T-cell (primary cell): ENCODE measurements at regions of chr12 and their contacts with region 1.

Region 1: DNA sequence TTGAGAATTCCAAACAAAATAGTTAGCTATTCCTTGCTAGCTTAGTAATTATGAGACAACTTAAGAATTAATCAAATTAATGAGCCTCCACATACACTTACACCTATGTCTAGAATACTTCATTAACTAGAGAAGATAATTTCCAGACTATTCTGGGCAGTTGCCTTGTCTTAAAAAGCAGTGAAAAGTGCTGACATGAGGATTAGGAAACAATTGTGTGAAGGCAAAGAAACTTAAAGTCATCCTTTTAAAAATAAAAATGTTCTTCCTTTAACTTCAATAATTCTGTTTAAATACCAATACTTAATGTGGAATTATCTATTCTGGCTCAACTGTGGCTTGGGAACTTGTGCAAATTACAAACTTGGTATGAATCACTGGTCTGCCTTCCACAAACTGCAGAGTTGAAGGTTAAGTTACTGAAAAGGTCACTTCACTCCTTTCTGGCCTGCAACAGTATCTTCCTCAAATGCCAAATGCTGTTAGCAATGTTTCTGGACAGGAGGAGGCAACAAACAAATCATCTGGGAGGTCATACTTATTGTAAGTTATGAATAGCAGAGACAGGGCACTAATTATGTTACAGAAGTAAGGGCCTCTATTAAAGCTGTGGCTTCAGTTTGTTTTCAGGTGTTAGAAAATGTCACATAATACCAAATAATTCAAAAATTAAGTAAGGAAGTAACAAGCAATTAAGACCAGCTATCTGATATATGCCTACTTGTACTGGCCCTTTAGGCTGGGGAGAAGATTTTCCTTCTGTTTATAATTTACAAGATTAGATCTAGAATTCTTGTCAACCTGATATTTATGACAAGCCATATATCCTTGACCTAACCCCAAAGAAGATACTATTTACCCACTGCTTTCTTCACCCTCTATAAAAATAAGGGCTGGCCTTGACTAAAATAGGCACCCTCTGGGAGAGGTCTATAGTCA is 19.1 kb downstream of the PPTC7 start:
- DNase-seq: no peak
- ATAC-seq: no peak
- H3K4me3 ChIP-seq: no peak overlapping the region
- H3K4me3 Mint-ChIP-seq: no peak overlapping the region
- H3K27ac ChIP-seq: peak overlapping the region; percentile 55
- H3K27ac Mint-ChIP-seq: peak overlapping the region; percentile 75 to 88
- H3K4me1 ChIP-seq: peaks cover 28 to 55% of the 10 kb centered on the region in 2 experiments
- H3K4me1 Mint-ChIP-seq: peaks cover 79 to 81% (median 80%) of the 10 kb centered on the region in 3 donors
- H3K27me3 ChIP-seq: no peaks in the 10 kb centered on the region
- H3K27me3 Mint-ChIP-seq: no peaks in the 10 kb centered on the region

Region 2: DNA sequence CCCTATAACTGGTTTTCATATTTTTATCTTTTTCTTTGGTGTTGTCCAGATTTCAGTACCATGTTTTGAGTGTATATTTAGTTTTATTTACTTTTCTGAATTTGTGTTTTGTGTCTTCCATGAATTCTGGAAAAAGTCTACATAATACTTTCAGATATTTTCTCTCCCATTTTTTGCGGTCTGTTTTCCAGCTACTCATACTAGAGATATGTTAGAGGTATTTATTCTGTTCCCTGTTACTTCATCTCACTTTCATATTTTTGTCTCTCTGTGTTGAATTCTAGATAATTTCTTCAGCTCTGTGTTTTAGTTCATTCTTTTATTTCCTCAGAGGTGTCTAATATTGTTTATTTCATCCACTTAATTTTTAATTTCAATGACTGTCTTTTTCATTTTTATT is 365.6 kb before region 1 on chr12:
- CTCF ChIA-PET with region 1: no interaction called
- POLR2A ChIA-PET with region 1: no interaction called
- DNase-seq: no peak
- ATAC-seq: no peak
- H3K4me3 ChIP-seq: no peak overlapping the region
- H3K4me3 Mint-ChIP-seq: no peak overlapping the region
- H3K27ac ChIP-seq: no peak overlapping the region
- H3K27ac Mint-ChIP-seq: no peak overlapping the region
- H3K4me1 ChIP-seq: peaks cover 0 to 4% of the 10 kb centered on the region in 2 experiments
- H3K4me1 Mint-ChIP-seq: peaks cover 6 to 8% (median 7%) of the 10 kb centered on the region in 3 donors
- H3K27me3 ChIP-seq: no peaks in the 10 kb centered on the region
- H3K27me3 Mint-ChIP-seq: no peaks in the 10 kb centered on the region

Region 3: DNA sequence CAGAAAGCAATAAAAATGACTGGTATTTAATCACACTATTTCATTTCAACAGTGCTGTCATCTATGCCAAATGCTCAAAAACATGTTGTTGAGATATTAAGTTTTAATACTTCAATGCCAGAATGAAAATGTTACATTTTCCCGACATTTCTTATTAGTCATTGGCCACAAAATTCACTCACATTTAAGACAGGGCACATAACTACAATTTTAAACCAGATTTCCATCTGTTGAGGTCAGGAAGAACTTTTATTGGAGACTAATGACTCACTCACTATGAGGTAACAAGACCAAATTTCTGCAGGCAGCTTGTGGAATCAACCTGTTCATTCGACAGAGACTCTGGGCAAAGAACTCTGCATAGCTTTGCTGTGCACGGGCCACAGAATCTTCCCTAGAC is 17.6 kb before region 1 on chr12:
- CTCF ChIA-PET with region 1: interaction called in 1 of 2 experiments, 5 read pairs
- POLR2A ChIA-PET with region 1: interaction called in 1 of 2 experiments, 14 read pairs
- DNase-seq: no peak
- ATAC-seq: no peak
- H3K4me3 ChIP-seq: no peak overlapping the region
- H3K4me3 Mint-ChIP-seq: no peak overlapping the region
- H3K27ac ChIP-seq: no peak overlapping the region
- H3K27ac Mint-ChIP-seq: peak overlapping the region in 1 of 2 donors; percentile 44
- H3K4me1 ChIP-seq: peaks cover 0 to 4% of the 10 kb centered on the region in 2 experiments
- H3K4me1 Mint-ChIP-seq: peaks cover 33 to 50% (median 39%) of the 10 kb centered on the region in 3 donors
- H3K27me3 ChIP-seq: no peaks in the 10 kb centered on the region
- H3K27me3 Mint-ChIP-seq: no peaks in the 10 kb centered on the region

Region 4: GRCh38 chr12:110577717-110578521 is 13.9 kb after region 1 on chr12:
- CTCF ChIA-PET with region 1: interaction called, 6 to 10 read pairs
- POLR2A ChIA-PET with region 1: interaction called, 6 to 8 read pairs
- DNase-seq: peak in 2 of 35 experiments; percentile 15 to 60
- ATAC-seq: peak; percentile 9 to 55 (median 48)
- H3K4me3 ChIP-seq: no peak overlapping the region
- H3K4me3 Mint-ChIP-seq: peak overlapping the region; percentile 73 to 93 (median 91)
- H3K27ac ChIP-seq: peak overlapping the region; percentile 97
- H3K27ac Mint-ChIP-seq: peak overlapping the region; percentile 84 to 96
- H3K4me1 ChIP-seq: peaks cover 42 to 57% of the 10 kb centered on the region in 2 experiments
- H3K4me1 Mint-ChIP-seq: peaks cover 75 to 79% (median 77%) of the 10 kb centered on the region in 3 donors
- H3K27me3 ChIP-seq: no peaks in the 10 kb centered on the region
- H3K27me3 Mint-ChIP-seq: no peaks in the 10 kb centered on the region

Region 5: GRCh38 chr12:110590806-110591326 is 26.9 kb after region 1 on chr12:
- CTCF ChIA-PET with region 1: interaction called, 3 to 7 read pairs
- POLR2A ChIA-PET with region 1: interaction called, 4 to 10 read pairs
- DNase-seq: peak in 4 of 35 experiments; percentile 6 to 79 (median 17)
- ATAC-seq: peak; percentile 69 to 98 (median 84)
- H3K4me3 ChIP-seq: no peak overlapping the region
- H3K4me3 Mint-ChIP-seq: peak overlapping the region; percentile 5 to 56 (median 22)
- H3K27ac ChIP-seq: peak overlapping the region; percentile 85
- H3K27ac Mint-ChIP-seq: peak overlapping the region; percentile 93 to 97
- H3K4me1 ChIP-seq: peaks cover 8 to 18% of the 10 kb centered on the region in 2 experiments
- H3K4me1 Mint-ChIP-seq: peaks cover 25 to 33% (median 26%) of the 10 kb centered on the region in 3 donors
- H3K27me3 ChIP-seq: no peaks in the 10 kb centered on the region
- H3K27me3 Mint-ChIP-seq: no peaks in the 10 kb centered on the region